ENCODE measurements at regions of chr1 and their contacts with region 1.

Region 1: GRCh38 chr1:245156081-245156735 is 1.4 kb downstream of the KIF26B start:
- DNase-seq: peak; percentile 49
- H3K4me3 ChIP-seq: peak overlapping the region; percentile 82
- CTCF ChIP-seq: peak; percentile 62

Region 2: DNA sequence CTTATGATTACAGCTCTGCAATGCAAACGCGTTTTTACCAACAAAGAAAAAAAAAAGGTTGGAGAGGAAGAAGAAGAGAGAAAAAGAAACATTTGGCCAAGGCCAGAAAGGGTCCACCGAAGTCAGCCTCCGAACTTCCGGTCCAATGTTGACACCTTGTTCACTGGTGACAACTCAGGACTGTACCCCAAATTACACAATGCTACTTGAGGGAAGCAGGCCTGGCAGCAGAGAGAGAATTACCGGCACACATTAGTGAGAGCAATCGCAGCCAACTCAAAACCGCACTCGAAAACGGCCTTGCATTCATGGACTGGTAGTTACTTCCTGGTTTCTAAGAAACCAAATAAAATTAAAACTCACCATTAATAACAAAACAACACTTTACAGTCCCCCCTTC is 651.1 kb after region 1 on chr1:
- in situ Hi-C with region 1: loop called (anchors 10 kb)
- DNase-seq: peak; percentile 49
- H3K4me3 ChIP-seq: no peak overlapping the region
- CTCF ChIP-seq: no peak